ENCODE measurements at regions of chr4 and their contacts with region 1.

Region 1: GRCh38 chr4:6709230-6710114 is at the start of gene MRFAP1L1:
- DNase-seq: peak; percentile 96 to 98
- ATAC-seq: peak; percentile 80 to 97 (median 92)
- H3K4me3 ChIP-seq: peak within 1 kb of the TSS; percentile 32 to 93 (median 82)
- H3K27ac ChIP-seq: peak within 1 kb of the TSS; percentile 41 to 93 (median 84)
- H3K4me1 ChIP-seq: peaks cover 2 to 56% (median 48%) of the 10 kb centered on the region in 9 donors
- H3K27me3 ChIP-seq: no peaks in the 10 kb centered on the region
- CTCF ChIP-seq: peak in 3 of 9 donors; percentile 7 to 28 (median 10)
- total RNA-seq, gene MRFAP1L1: 37.5 to 49.9 (median 42.1) TPM

Region 2: GRCh38 chr4:6640292-6641163 is 68.9 kb before region 1 on chr4 and contains the start of gene MRFAP1:
- intact Hi-C with region 1: loop called in 8 of 10 experiments (anchors 1 to 10 kb)
- DNase-seq: peak; percentile 94 to 96
- ATAC-seq: peak; percentile 92 to 97 (median 96)
- H3K4me3 ChIP-seq: peak within 1 kb of the TSS; percentile 74 to 96 (median 86)
- H3K27ac ChIP-seq: peak within 1 kb of the TSS; percentile 86 to 93 (median 90)
- H3K4me1 ChIP-seq: peaks cover 14 to 40% (median 34%) of the 10 kb centered on the region in 9 donors
- H3K27me3 ChIP-seq: no peaks in the 10 kb centered on the region
- CTCF ChIP-seq: no peak
- total RNA-seq, gene MRFAP1: 222 to 268 (median 248) TPM

Region 3: GRCh38 chr4:6673660-6674499 is 35.6 kb before region 1 on chr4:
- intact Hi-C with region 1: loop called in 3 of 10 experiments (anchors 2 to 5 kb)
- DNase-seq: peak; percentile 92 to 94
- ATAC-seq: peak; percentile 92 to 98 (median 94)
- H3K4me3 ChIP-seq: peak overlapping the region; percentile 36 to 97 (median 74)
- H3K27ac ChIP-seq: peak overlapping the region; percentile 63 to 92 (median 88)
- H3K4me1 ChIP-seq: peaks cover 14 to 41% (median 36%) of the 10 kb centered on the region in 9 donors
- H3K27me3 ChIP-seq: no peaks in the 10 kb centered on the region
- CTCF ChIP-seq: peak in 1 of 9 donors; percentile 15

Region 4: GRCh38 chr4:6794189-6794588 is 84.7 kb after region 1 on chr4:
- intact Hi-C with region 1: no loop called
- DNase-seq: no peak
- ATAC-seq: peak in 1 of 8 donors; percentile 19
- H3K4me3 ChIP-seq: no peak overlapping the region
- H3K27ac ChIP-seq: peak overlapping the region in 1 of 10 donors; percentile 0
- H3K4me1 ChIP-seq: peaks cover 0 to 77% (median 37%) of the 10 kb centered on the region in 9 donors
- H3K27me3 ChIP-seq: no peaks in the 10 kb centered on the region
- CTCF ChIP-seq: no peak

Region 5: DNA sequence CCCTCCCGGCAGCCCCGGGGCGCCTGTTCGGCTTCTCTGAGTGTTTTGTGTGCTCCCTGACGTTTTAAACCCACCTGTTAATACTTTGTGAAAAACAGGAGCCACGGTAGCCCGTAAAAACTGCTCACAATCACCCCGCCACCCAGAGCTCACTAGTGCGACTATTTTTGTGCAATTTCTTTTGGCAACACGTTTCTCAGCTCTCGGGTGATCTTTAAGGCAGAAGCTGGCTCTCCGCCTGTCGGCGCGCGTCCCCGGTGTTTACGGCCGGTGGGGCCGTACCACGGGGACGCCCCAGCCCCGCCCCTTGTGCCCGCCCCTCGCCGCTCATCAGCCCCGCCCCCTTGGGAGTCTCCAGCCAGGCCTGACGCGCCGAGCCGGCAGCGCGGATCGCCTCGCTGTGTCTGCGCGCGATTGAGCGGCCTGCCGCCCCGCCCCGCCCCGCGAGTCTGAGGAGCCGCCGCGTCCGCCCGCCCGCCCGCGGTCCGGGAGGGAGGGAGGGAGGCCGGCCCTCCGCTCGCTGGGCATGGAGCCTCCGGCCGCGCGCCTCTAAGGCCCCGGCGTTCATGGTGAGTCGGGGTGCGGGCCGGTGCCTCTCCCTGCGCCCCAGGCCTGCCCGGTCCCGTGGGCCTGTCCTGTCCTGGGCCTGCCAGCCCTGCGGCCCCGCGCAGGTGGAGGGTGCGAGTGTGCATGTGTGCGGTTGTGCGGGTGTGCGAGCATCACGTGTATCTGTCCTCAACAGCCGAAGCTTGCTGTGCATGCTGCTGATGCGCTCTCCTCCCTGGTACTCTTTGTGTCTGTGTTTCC is 277.5 kb after region 1 on chr4:
- intact Hi-C with region 1: loop called in 5 of 10 experiments (anchors 10 kb)
- DNase-seq: peak; percentile 94 to 97
- ATAC-seq: peak; percentile 95 to 98 (median 96)
- H3K4me3 ChIP-seq: peak overlapping the region; percentile 64 to 98 (median 88)
- H3K27ac ChIP-seq: peak overlapping the region; percentile 84 to 98 (median 94)
- H3K4me1 ChIP-seq: peaks cover 13 to 85% (median 57%) of the 10 kb centered on the region in 9 donors
- H3K27me3 ChIP-seq: no peaks in the 10 kb centered on the region
- CTCF ChIP-seq: peak in 2 of 9 donors; percentile 27 to 28

Region 6: GRCh38 chr4:7042697-7043464 is 333.4 kb after region 1 on chr4 and contains the start of gene TADA2B:
- intact Hi-C with region 1: loop called in 2 of 10 experiments (anchors 10 kb)
- DNase-seq: peak; percentile 96 to 98
- ATAC-seq: peak; percentile 94 to 97 (median 97)
- H3K4me3 ChIP-seq: peak within 1 kb of the TSS; percentile 83 to 100 (median 99)
- H3K27ac ChIP-seq: peak within 1 kb of the TSS; percentile 86 to 96 (median 94)
- H3K4me1 ChIP-seq: peaks cover 21 to 55% (median 51%) of the 10 kb centered on the region in 9 donors
- H3K27me3 ChIP-seq: no peaks in the 10 kb centered on the region
- CTCF ChIP-seq: peak in 8 of 9 donors; percentile 28 to 57 (median 44)
- total RNA-seq, gene TADA2B: 26.2 to 40.8 (median 31.5) TPM

Measured in heart right ventricle (tissue), 16 donors.